ENCODE measurements at regions of chr1 and their contacts with region 1.

Region 1: DNA sequence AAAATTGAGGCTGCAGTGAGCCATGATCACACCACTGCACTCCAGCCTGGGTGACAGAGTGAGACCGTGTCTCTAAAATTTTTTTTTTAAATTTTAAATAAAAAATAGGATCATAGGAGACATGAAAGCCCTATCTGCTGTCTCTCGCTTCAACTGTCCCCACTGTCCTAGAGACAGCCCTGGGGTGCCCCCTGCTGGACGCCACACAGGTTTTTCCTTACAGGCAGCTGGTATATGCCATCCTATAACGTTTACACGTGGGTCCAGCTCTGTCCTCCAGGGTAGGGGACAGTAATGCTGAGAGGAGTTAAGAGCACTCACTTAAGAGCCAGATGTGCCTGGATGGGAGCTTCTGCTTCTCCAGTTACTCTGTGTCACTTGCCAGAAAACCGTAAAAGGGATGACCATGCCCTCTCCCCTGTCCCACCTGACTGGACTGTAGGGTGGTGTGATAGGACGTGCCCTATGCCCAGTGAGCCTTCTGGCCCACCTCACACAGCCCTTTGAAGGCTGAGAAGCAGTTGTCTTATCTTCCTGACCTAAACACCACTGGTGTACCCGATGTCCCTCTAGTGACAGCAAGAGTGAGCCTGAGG is 8.5 kb downstream of the FBXO2 start:
- DNase-seq: peak; percentile 77 to 90 (median 80)
- ATAC-seq: peak; percentile 59
- H3K4me3 ChIP-seq: no peak overlapping the region
- H3K27ac ChIP-seq: no peak overlapping the region
- H3K4me1 ChIP-seq: peaks cover 15 to 39% of the 10 kb centered on the region in 2 experiments; a peak in 4 of 5 replicates
- H3K27me3 ChIP-seq: peaks cover 2 to 13% of the 10 kb centered on the region in 2 experiments; a peak in 4 of 5 replicates
- CTCF ChIP-seq: peak; percentile 85 to 93 (median 92)
- EP300 ChIP-seq: no peak
- POLR2A ChIP-seq: no peak
- RAD21 ChIP-seq: peak; percentile 80 to 89

Region 2: GRCh38 chr1:10686404-10687040 is 959.2 kb before region 1 on chr1:
- CTCF ChIA-PET with region 1: no interaction called
- POLR2A ChIA-PET with region 1: no interaction called
- in situ Hi-C with region 1: no loop called
- intact Hi-C with region 1: no loop called
- DNase-seq: no peak
- ATAC-seq: no peak
- H3K4me3 ChIP-seq: no peak overlapping the region
- H3K27ac ChIP-seq: no peak overlapping the region
- H3K4me1 ChIP-seq: peaks cover 10 to 45% of the 10 kb centered on the region in 2 experiments; a peak in 4 of 5 replicates
- H3K27me3 ChIP-seq: peaks cover 16 to 29% of the 10 kb centered on the region in 2 experiments; a peak in 3 of 5 replicates
- CTCF ChIP-seq: 0 out of 6 replicates have a peak, but pooled peaks of 1 of the 3 experiments have one; percentile 12
- EP300 ChIP-seq: no peak
- POLR2A ChIP-seq: no peak
- RAD21 ChIP-seq: no peak

Region 3: DNA sequence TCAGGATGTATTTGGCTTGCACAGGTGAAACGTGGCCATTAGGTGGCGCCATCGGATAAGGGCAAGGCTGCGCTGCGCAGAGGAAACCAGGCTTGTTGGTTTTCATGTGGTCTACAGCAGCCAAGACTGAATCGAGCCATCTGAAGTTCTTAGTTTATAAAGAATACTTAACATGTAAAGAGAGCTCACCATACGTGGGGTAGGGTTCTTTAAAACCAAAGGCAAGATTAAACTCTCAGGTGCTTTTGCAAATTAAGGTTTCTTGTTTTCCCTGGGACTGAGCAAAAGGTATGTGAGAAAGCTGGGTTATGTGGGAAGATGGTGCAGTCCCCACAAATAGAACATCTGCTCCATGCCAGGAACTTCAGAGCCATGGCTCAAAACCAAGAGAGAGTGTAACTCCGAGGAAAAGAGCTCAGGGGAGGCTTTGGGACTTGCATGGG is 608.0 kb before region 1 on chr1:
- CTCF ChIA-PET with region 1: interaction called, 20 read pairs
- POLR2A ChIA-PET with region 1: interaction called, 6 read pairs
- in situ Hi-C with region 1: no loop called
- intact Hi-C with region 1: loop called (anchors 1 kb)
- DNase-seq: peak; percentile 83 to 91 (median 85)
- ATAC-seq: peak; percentile 98
- H3K4me3 ChIP-seq: no peak overlapping the region
- H3K27ac ChIP-seq: no peak overlapping the region
- H3K4me1 ChIP-seq: no peaks in the 10 kb centered on the region
- H3K27me3 ChIP-seq: peaks cover 8 to 20% of the 10 kb centered on the region in 2 experiments
- CTCF ChIP-seq: peak; percentile 96 to 99 (median 99)
- EP300 ChIP-seq: no peak
- POLR2A ChIP-seq: no peak
- RAD21 ChIP-seq: peak; percentile 97 to 99

Region 4: DNA sequence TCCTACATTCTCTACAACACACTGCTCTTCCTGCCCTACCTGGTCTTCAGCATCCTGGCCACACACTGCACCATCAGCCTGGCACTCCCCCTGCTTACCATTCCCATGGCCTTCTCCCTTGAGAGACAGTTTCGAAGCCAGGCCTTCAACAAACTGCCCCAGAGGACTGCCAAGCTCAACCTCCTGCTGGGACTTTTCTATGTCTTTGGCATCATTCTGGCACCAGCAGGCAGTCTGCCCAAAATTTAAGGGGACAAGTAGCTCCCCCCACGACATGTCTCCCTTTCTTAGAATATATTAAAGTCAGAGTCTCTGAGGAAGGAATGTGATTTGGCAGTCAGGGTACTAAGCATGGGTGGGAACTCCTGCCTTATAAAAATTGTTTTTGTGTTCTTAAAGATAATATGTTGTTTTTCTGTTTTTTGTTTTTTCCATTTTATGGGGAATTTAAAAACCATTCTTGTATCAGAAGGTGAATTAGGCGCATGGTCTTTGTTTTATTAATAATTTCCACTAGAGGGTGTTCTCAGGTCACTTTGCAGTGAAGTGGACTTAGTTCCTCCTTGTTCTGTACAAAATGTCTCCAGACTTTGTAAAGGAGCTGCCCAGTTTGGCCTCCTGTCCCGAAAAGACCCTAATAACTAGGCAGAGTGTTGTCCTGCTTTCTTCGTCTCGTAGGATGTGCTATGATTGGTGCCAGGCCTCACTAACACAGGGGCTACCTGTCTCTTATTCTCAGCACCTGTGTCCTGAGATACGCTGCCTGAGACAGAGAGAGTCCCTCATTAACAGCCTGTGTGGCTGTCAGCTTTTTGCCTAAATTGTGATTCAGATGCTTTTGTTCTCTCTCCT is 359.7 kb before region 1 on chr1:
- CTCF ChIA-PET with region 1: no interaction called
- POLR2A ChIA-PET with region 1: no interaction called
- in situ Hi-C with region 1: no loop called
- intact Hi-C with region 1: no loop called
- DNase-seq: no peak
- ATAC-seq: peak; percentile 46; the same call in 1 of the 3 replicates
- H3K4me3 ChIP-seq: no peak overlapping the region
- H3K27ac ChIP-seq: no peak overlapping the region
- H3K4me1 ChIP-seq: no peaks in the 10 kb centered on the region
- H3K27me3 ChIP-seq: no peaks in the 10 kb centered on the region
- CTCF ChIP-seq: peak; percentile 22 to 49 (median 22); a peak in 3 of 6 replicates
- EP300 ChIP-seq: no peak
- POLR2A ChIP-seq: no peak
- RAD21 ChIP-seq: peak in 1 of 2 experiments; percentile 41; a peak in 2 of 4 replicates

Region 5: GRCh38 chr1:11337580-11338073 is 308.1 kb before region 1 on chr1:
- CTCF ChIA-PET with region 1: interaction called, 6 read pairs
- POLR2A ChIA-PET with region 1: no interaction called
- in situ Hi-C with region 1: no loop called
- intact Hi-C with region 1: loop called (anchors 2 kb)
- DNase-seq: peak; percentile 78 to 93 (median 88)
- ATAC-seq: peak; percentile 93
- H3K4me3 ChIP-seq: no peak overlapping the region
- H3K27ac ChIP-seq: no peak overlapping the region
- H3K4me1 ChIP-seq: peaks cover 0 to 3% of the 10 kb centered on the region in 2 experiments; a peak in 1 of 5 replicates
- H3K27me3 ChIP-seq: peaks cover 42 to 82% of the 10 kb centered on the region in 2 experiments
- CTCF ChIP-seq: peak; percentile 89 to 98 (median 93)
- EP300 ChIP-seq: no peak
- POLR2A ChIP-seq: no peak
- RAD21 ChIP-seq: peak; percentile 39 to 71

Region 6: DNA sequence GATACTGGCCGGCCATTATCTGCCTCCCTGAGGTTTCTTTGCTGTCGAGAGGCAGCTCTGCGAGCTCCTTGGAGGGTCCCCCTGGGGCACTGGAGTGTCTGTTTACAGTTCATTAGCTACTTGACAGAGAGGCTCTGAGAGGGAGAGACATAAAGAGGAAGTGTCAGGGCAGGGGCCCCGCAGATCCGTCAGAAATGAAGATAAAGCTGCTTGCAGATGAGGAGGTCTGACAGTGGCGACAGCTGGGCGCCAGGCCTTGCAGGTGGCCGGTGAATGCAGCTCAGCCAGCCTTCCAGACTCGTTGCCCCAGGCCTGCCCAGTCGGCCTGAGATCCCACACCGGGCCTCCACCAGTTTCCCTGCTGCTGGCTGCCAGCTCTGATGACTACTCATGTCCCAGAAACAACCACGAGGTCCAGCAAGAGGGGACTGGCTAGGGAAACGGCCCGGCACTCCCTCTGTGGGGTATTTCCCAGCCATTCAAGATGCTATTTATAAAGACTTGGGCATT is 82.2 kb before region 1 on chr1:
- CTCF ChIA-PET with region 1: no interaction called
- POLR2A ChIA-PET with region 1: no interaction called
- in situ Hi-C with region 1: no loop called
- intact Hi-C with region 1: no loop called
- DNase-seq: peak in 1 of 4 experiments; percentile 30
- ATAC-seq: peak; percentile 69
- H3K4me3 ChIP-seq: no peak overlapping the region
- H3K27ac ChIP-seq: no peak overlapping the region
- H3K4me1 ChIP-seq: peaks cover 0 to 14% of the 10 kb centered on the region in 2 experiments; a peak in 3 of 5 replicates
- H3K27me3 ChIP-seq: peaks cover 15 to 44% of the 10 kb centered on the region in 2 experiments
- CTCF ChIP-seq: no peak
- EP300 ChIP-seq: no peak
- POLR2A ChIP-seq: no peak
- RAD21 ChIP-seq: no peak

Region 7: DNA sequence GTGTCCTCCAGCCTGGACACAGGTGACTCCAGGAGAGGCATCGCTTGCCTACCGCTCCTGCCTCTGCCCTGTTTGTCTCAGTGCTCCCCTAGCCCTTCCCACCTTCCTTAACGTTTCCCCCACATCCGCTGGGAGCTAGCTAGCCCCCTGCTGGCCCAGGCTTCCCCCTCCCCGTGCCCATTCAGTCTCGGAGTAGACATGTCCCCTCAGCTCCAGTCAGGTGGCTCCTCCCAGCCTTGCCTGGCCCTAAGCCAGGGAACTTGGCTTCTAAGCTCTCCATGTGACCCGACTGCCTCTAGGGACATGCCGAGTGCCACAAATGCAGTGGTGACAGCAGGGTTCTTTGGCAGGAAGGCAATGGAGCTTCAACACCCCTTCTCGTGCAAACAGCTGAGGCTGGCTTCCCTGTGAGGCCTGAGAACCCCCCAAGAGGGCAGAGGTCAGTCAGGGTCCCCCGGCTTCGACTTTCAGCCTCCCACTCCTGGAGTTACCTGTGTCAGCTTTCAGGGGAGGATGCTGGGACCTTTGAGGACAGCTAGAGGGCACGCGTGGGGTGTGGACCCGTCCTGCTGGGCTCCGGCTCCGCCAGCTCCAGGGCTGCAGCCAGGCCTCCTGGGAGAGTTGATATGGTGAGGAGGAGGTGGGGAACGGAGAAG is 62.0 kb after region 1 on chr1:
- CTCF ChIA-PET with region 1: interaction called, 9 read pairs
- POLR2A ChIA-PET with region 1: interaction called, 5 read pairs
- in situ Hi-C with region 1: no loop called
- intact Hi-C with region 1: loop called (anchors 2 kb)
- DNase-seq: peak; percentile 73 to 88 (median 78)
- ATAC-seq: peak; percentile 78
- H3K4me3 ChIP-seq: no peak overlapping the region
- H3K27ac ChIP-seq: peak overlapping the region; percentile 71
- H3K4me1 ChIP-seq: peaks cover 12 to 48% of the 10 kb centered on the region in 2 experiments
- H3K27me3 ChIP-seq: peaks cover 7 to 24% of the 10 kb centered on the region in 2 experiments; a peak in 3 of 5 replicates
- CTCF ChIP-seq: peak; percentile 5 to 11 (median 6); a peak in 3 of 6 replicates
- EP300 ChIP-seq: no peak
- POLR2A ChIP-seq: no peak
- RAD21 ChIP-seq: 0 out of 4 replicates have a peak, but pooled peaks of 1 of the 2 experiments have one; percentile 0

Region 8: GRCh38 chr1:11749203-11749689 is 103.5 kb after region 1 on chr1:
- CTCF ChIA-PET with region 1: interaction called, 22 read pairs
- POLR2A ChIA-PET with region 1: no interaction called
- in situ Hi-C with region 1: no loop called
- intact Hi-C with region 1: loop called (anchors 2 kb)
- DNase-seq: peak; percentile 87 to 94 (median 92)
- ATAC-seq: peak; percentile 94
- H3K4me3 ChIP-seq: no peak overlapping the region
- H3K27ac ChIP-seq: no peak overlapping the region
- H3K4me1 ChIP-seq: peaks cover 29 to 60% of the 10 kb centered on the region in 2 experiments
- H3K27me3 ChIP-seq: no peaks in the 10 kb centered on the region
- CTCF ChIP-seq: peak; percentile 92 to 98 (median 96)
- EP300 ChIP-seq: no peak
- POLR2A ChIP-seq: no peak
- RAD21 ChIP-seq: peak; percentile 94 to 96

Region 9: DNA sequence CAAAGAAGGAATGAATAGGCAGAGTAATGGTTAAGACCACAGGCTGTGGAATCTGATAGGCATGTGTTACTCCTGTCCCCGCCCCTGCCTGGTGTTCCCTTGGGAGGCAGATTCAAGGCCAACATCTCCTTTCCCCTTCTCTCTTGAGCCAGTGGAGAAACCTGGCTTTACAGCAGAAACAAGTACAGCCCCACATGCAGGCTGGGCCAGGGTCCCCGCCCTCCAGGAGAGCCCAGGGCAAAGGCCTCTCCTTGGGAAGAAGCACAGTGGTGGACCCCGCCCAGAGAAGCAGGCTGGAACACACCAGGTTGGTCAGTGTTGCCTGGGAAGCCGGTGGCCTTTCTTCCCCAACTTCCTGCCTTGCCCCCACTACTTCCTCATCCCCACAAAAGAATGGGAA is 123.1 kb after region 1 on chr1:
- CTCF ChIA-PET with region 1: no interaction called
- POLR2A ChIA-PET with region 1: no interaction called
- in situ Hi-C with region 1: no loop called
- intact Hi-C with region 1: no loop called
- DNase-seq: no peak
- ATAC-seq: peak; percentile 21; the same call in 2 of the 3 replicates
- H3K4me3 ChIP-seq: no peak overlapping the region
- H3K27ac ChIP-seq: no peak overlapping the region
- H3K4me1 ChIP-seq: peaks cover 5 to 33% of the 10 kb centered on the region in 2 experiments; a peak in 4 of 5 replicates
- H3K27me3 ChIP-seq: no peaks in the 10 kb centered on the region
- CTCF ChIP-seq: no peak
- EP300 ChIP-seq: no peak
- POLR2A ChIP-seq: no peak
- RAD21 ChIP-seq: no peak